Endothelial cell of umbilical vein (primary cell): ENCODE measurements at regions of chr18 and their contacts with region 1.

Region 1: GRCh38 chr18:23784832-23785245 is 95.6 kb downstream of the LAMA3 start:
- DNase-seq: peak; percentile 92
- H3K4me3 ChIP-seq: no peak overlapping the region
- H3K27ac ChIP-seq: peak overlapping the region; percentile 76
- H3K4me1 ChIP-seq: peaks cover 9% of the 10 kb centered on the region
- H3K27me3 ChIP-seq: no peaks in the 10 kb centered on the region
- CTCF ChIP-seq: no peak
- POLR2A ChIP-seq: no peak

Region 2: DNA sequence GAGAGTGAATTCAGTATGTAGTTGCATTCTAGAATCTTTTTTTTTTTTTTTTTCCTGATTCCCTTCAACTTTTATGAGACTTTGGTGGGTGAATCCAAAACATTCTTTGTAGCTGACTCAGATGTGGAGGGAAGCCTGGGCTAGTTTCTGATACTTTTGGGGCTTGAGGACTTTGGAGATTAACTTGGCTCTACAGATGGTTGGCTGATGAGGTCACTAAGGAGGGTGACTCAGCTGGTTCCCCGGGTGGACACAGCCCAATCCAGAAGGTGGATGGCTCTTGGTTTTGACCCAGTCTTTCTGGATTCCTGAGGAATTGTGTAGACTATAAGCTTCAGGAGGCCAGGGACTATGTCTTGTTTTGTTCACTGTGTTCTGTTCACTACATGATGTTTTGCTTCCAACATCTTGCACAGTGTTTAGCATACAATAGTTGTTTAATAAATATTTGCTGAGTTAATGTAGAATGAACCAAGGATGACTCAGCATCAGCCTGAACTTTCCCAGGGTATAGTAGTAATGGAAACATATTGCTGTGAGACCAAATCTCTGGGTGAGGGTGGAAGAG is 65.1 kb before region 1 on chr18:
- CTCF ChIA-PET with region 1: interaction called, 3 read pairs
- POLR2A ChIA-PET with region 1: no interaction called
- dilution Hi-C with region 1: no loop called
- intact Hi-C with region 1: loop called (anchors 1 kb)
- DNase-seq: peak; percentile 88
- H3K4me3 ChIP-seq: no peak overlapping the region
- H3K27ac ChIP-seq: peak overlapping the region; percentile 84
- H3K4me1 ChIP-seq: peaks cover 19% of the 10 kb centered on the region
- H3K27me3 ChIP-seq: no peaks in the 10 kb centered on the region
- CTCF ChIP-seq: no peak
- POLR2A ChIP-seq: no peak

Region 3: DNA sequence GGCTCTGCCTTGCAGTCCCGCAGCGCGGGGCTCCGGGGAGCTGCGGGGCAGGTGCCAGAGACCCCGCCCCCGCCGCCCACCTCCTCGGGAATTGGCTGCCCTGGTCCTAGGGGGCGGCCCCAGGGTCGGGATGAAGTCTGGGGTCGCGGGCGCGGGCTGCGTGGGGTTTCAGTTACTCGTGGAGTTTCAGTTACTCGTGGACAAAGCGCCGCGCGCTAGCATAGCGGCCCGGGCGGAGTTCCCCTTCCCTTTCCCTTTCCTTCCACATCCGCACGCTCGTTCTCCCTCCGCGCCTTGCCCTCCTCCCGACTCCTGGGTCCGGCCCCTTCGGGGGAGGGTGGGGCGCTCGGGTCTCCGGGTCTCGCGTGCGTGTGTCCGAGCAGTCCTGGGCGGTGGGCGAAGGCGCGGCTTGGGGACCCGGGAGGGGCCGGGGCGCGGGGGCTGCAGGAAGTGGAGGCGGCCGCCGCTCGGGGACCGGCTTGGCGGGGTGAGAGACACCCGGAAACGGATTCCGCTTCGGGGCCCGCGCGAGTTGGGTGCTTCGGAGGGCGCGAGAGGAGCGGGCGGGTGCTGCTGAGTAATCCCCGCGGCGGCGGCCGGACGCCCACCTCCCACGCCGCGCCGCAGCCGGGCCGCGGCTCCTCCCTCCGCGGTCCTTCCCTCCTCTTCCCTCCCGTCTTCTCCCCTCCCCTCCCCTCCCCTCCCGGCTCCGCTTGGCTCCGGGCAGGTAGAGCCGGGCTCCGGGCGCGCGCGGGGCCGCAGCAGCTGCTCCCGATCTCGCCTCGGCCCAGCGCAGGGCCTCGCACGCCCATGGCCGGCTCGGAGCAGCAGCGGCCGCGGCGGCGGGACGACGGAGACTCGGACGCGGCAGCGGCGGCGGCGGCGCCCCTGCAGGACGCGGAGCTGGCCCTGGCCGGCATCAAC is 229.5 kb after region 1 on chr18 and contains the start of gene TTC39C:
- CTCF ChIA-PET with region 1: no interaction called
- POLR2A ChIA-PET with region 1: no interaction called
- dilution Hi-C with region 1: no loop called
- intact Hi-C with region 1: no loop called
- DNase-seq: peak; percentile 29
- H3K4me3 ChIP-seq: peak within 1 kb of the TSS; percentile 70 to 79 (median 77)
- H3K27ac ChIP-seq: no peak within 1 kb of the TSS
- H3K4me1 ChIP-seq: peaks cover 8% of the 10 kb centered on the region
- H3K27me3 ChIP-seq: peaks cover 34 to 47% of the 10 kb centered on the region in 2 experiments
- CTCF ChIP-seq: no peak
- POLR2A ChIP-seq: no peak
- total RNA-seq, gene TTC39C: 3.9 and 6.2 TPM in 2 replicates

Region 4: DNA sequence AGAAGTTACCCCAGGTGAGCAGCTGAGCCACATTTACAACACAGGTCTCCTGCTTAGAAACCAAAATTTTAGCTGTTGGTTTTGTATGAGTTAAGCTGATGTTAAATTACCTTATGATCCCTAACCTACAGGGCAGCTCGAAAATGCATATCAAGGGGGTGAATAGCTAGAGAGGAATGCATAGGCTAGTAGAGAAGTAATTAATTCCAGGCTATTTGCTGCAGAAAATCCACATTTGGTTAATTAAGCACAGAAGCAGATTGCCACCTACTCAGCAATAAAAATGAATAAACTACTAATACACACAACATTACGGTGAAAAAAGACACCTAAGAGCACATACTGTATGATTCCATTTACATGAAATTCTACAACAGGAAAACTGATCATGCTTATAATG is 521.4 kb after region 1 on chr18:
- CTCF ChIA-PET with region 1: no interaction called
- POLR2A ChIA-PET with region 1: no interaction called
- dilution Hi-C with region 1: no loop called
- intact Hi-C with region 1: no loop called
- DNase-seq: no peak
- H3K4me3 ChIP-seq: no peak overlapping the region
- H3K27ac ChIP-seq: no peak overlapping the region
- H3K4me1 ChIP-seq: no peaks in the 10 kb centered on the region
- H3K27me3 ChIP-seq: no peaks in the 10 kb centered on the region
- CTCF ChIP-seq: no peak
- POLR2A ChIP-seq: no peak